ENCODE measurements at regions of chr11 and their contacts with region 1.

Region 1: GRCh38 chr11:13717331-13717730 is 48.9 kb downstream of the FAR1 start:
- DNase-seq: no peak
- H3K4me3 ChIP-seq: no peak overlapping the region
- CTCF ChIP-seq: no peak
- POLR2A ChIP-seq: no peak

Region 2: DNA sequence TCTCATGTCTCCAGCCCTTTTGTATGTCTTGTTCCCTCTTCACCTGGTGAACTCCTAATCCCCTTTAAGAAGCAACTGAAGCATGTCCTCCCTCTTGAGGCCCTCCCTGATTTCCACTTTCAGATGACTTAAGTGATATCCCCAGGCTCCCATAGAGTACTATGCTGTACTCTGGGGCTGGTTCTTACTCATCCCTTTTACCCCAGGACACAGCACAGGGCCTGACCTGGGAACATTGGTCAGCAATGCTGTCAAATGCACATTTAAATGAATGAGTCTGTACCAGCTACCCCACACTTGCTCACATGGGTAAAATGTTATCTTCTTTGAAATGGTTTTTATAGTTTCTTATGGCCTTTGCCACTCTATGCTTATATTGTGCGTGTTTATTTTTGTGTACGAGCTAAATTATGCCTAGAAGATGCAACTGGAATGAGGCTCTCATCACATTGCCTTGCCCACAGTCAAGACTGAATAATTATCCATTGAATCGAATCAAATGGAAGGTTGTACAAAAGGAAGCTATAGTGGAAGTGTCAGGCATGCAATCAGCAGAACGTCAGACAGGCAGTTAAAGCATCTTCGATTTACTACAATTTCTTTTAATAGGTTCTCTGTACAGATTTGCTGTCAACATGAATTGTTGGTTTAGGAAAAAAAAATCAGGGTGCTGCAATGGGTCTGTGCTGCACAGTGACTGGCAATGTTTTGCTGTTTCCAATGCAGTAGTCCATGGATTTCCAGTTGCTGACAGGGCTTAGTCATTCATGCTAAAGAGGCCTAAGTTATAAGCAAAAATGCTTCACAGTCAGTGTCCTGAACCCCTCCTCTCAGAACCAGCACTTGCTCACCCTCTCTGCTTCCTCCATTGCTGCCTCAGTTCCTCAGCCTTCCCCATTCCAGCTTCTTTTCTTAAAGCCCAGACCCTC is 1260.4 kb before region 1 on chr11:
- intact Hi-C with region 1: loop called (anchors 5 kb)
- DNase-seq: no peak
- H3K4me3 ChIP-seq: no peak overlapping the region
- CTCF ChIP-seq: no peak
- POLR2A ChIP-seq: no peak

Region 3: DNA sequence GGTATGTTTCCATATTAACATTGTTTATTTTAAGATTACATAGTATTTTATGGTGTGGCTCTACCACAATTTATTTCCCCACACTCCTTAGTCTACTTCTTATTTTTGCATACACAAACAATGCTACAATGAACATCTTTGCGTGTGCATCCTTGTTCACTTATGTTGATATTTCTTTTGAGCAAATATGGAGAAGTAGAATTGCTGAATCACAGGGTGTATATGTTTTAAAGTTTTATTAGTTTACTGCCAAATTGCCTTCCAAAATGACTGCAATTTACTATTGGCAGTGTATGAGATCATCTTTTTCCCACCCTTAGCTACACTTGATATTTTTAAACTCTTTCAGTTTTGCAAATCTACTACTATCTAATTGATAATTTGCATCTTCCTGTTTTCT is 87.6 kb before region 1 on chr11:
- intact Hi-C with region 1: no loop called
- DNase-seq: no peak
- H3K4me3 ChIP-seq: no peak overlapping the region
- CTCF ChIP-seq: no peak
- POLR2A ChIP-seq: no peak

Measured in lower leg skin (tissue), 4 donors.